ENCODE measurements at regions of chr1 and their contacts with region 1.

Region 1: DNA sequence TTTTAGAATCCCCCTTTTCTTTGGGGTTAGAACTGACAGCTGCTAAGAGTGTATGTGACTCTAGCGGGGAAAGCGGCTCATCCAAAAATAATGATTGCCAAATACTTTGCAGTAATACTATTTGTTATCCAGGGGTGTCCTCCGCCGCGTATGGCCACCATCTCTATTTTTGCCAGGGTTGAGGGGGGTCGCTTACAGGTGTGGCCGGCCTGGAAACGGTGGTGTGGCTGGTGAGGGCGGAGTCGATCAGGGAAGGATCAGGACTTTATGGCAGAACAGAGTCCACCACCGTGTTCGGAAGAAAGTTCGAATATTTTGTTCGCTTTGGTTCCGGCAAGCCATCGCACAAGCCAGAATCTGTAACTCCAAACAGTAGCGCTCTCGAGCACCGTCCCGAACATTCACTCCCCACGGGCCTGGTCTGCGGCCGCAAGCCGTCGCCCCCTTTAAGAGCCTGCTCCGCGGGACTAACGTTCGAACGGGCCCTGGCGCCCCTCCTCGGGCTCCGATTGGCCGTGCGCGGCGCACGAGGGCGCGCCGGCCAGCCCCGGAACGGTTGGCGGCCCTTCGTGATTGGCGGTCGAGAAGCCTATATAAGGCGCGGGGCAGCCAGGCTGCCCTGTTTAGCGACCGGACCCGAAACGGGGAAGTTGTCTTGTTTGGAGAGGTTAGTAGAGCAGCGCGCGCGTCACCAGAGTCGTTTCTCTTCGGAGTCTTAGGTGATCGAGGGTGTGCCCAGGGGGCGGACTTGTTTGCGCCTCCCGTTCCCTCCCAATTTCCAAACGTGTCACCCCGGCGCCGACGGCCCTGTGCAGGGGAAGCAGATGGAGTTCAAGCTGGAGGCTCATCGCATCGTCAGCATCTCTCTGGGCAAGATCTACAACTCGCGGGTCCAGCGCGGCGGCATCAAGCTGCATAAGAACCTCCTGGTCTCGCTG is at the start of gene IER5:
- DNase-seq: peak; percentile 97
- H3K4me3 ChIP-seq: peak within 1 kb of the TSS; percentile 47 to 97 (median 54)
- H3K27ac ChIP-seq: peak within 1 kb of the TSS; percentile 47
- H3K4me1 ChIP-seq: peaks cover 17% of the 10 kb centered on the region
- H3K27me3 ChIP-seq: no peaks in the 10 kb centered on the region
- CTCF ChIP-seq: no peak
- POLR2A ChIP-seq: peak; percentile 100
- total RNA-seq, gene IER5: 14.4 and 14.9 TPM in 2 replicates

Region 2: DNA sequence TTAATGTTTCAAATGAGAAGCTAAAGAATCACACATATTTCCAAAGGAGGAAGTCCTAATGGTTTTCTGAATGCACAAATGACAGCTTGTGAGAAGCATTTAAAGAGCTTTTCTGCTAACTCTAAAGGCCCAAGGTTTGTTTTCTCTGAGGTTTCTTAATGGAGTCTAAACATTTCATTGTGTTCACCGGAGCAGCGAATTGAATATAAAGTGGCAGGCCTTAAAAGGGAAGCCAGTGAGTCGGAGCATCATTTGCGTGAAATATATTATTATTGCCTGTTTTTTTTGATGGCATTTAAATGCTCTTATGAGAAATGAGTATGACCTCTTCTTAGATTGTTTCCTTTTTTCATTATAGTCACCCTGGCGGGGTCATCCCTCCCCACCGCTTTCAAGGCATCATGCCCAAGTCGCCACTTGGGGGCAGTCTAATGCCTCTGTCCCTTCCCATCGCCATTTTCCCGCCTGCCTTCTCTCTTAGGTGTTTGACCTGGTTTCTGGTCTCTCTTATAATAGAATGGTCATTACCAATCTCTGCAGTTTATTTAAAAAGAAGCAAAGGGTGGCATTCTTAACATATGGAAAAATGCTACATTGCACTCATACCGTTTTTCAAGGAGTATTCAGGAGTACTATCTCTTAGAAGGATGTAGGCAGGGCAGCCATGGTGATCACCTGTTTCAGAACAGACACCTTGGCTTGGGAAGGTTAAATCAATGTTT is 554.9 kb before region 1 on chr1:
- CTCF ChIA-PET with region 1: no interaction called
- POLR2A ChIA-PET with region 1: no interaction called
- dilution Hi-C with region 1: no loop called
- intact Hi-C with region 1: loop called (anchors 5 kb)
- DNase-seq: peak; percentile 66
- H3K4me3 ChIP-seq: no peak overlapping the region
- H3K27ac ChIP-seq: no peak overlapping the region
- H3K4me1 ChIP-seq: peaks cover 20% of the 10 kb centered on the region
- H3K27me3 ChIP-seq: peaks cover 6 to 18% of the 10 kb centered on the region in 2 experiments
- CTCF ChIP-seq: peak; percentile 79 to 88
- POLR2A ChIP-seq: no peak

Region 3: GRCh38 chr1:180997843-180998504 is 90.4 kb before region 1 on chr1:
- CTCF ChIA-PET with region 1: no interaction called
- POLR2A ChIA-PET with region 1: no interaction called
- dilution Hi-C with region 1: no loop called
- intact Hi-C with region 1: no loop called
- DNase-seq: no peak
- H3K4me3 ChIP-seq: no peak overlapping the region
- H3K27ac ChIP-seq: no peak overlapping the region
- H3K4me1 ChIP-seq: no peaks in the 10 kb centered on the region
- H3K27me3 ChIP-seq: no peaks in the 10 kb centered on the region
- CTCF ChIP-seq: no peak
- POLR2A ChIP-seq: no peak

Region 4: DNA sequence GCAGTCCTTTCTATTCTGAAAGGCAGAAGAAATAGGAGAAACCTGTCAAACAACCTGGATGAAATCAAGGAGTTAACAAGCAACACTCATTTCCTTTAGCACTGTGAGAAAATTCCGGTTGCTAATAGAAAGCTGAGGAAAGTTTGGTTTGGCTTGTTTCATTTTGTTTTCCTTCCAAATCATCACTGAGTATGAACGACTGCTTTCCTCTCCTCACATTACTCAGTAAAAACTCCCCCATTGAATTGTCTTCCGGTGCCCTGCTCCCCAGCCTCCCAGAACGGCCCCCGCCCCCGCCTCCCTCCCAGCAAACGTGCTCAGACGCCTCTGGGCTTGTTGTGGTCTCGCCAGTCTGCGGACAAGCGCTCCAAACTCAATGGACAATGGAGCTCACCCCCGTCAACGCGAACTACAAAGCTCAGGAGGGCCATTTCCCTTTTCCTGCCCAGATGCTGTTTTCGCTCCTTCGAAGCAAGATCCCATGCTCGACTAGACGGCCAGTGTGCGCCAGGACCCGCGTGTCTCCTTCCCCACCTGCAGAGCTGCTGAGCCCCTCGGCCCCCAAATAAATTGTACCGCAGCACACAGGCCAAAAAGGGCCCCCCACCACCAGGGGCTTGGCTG is 66.4 kb before region 1 on chr1:
- CTCF ChIA-PET with region 1: interaction called, 4 read pairs
- POLR2A ChIA-PET with region 1: interaction called, 27 read pairs
- dilution Hi-C with region 1: no loop called
- intact Hi-C with region 1: loop called (anchors 1 kb)
- DNase-seq: peak; percentile 96
- H3K4me3 ChIP-seq: peak overlapping the region; percentile 62 to 84 (median 79)
- H3K27ac ChIP-seq: peak overlapping the region; percentile 80
- H3K4me1 ChIP-seq: peaks cover 13% of the 10 kb centered on the region
- H3K27me3 ChIP-seq: peaks cover 5 to 11% of the 10 kb centered on the region in 2 experiments
- CTCF ChIP-seq: no peak
- POLR2A ChIP-seq: peak; percentile 55

Region 5: GRCh38 chr1:181099152-181100014 is 11.0 kb after region 1 on chr1:
- CTCF ChIA-PET with region 1: interaction called, 43 read pairs
- POLR2A ChIA-PET with region 1: interaction called, 114 read pairs
- dilution Hi-C with region 1: no loop called
- intact Hi-C with region 1: loop called (anchors 1 kb)
- DNase-seq: peak; percentile 60
- H3K4me3 ChIP-seq: no peak overlapping the region
- H3K27ac ChIP-seq: peak overlapping the region; percentile 19
- H3K4me1 ChIP-seq: peaks cover 47% of the 10 kb centered on the region
- H3K27me3 ChIP-seq: no peaks in the 10 kb centered on the region
- CTCF ChIP-seq: no peak
- POLR2A ChIP-seq: no peak

Region 6: GRCh38 chr1:181112071-181112929 is 24.0 kb after region 1 on chr1:
- CTCF ChIA-PET with region 1: interaction called, 3 read pairs
- POLR2A ChIA-PET with region 1: interaction called, 114 read pairs
- dilution Hi-C with region 1: no loop called
- intact Hi-C with region 1: loop called (anchors 1 kb)
- DNase-seq: peak; percentile 87
- H3K4me3 ChIP-seq: no peak overlapping the region
- H3K27ac ChIP-seq: no peak overlapping the region
- H3K4me1 ChIP-seq: peaks cover 23% of the 10 kb centered on the region
- H3K27me3 ChIP-seq: no peaks in the 10 kb centered on the region
- CTCF ChIP-seq: no peak
- POLR2A ChIP-seq: no peak

Region 7: GRCh38 chr1:181152892-181153633 is 64.7 kb after region 1 on chr1:
- CTCF ChIA-PET with region 1: interaction called, 20 read pairs
- POLR2A ChIA-PET with region 1: interaction called, 20 read pairs
- dilution Hi-C with region 1: no loop called
- intact Hi-C with region 1: no loop called
- DNase-seq: peak; percentile 98
- H3K4me3 ChIP-seq: no peak overlapping the region
- H3K27ac ChIP-seq: no peak overlapping the region
- H3K4me1 ChIP-seq: peaks cover 7% of the 10 kb centered on the region
- H3K27me3 ChIP-seq: no peaks in the 10 kb centered on the region
- CTCF ChIP-seq: peak; percentile 31 to 72
- POLR2A ChIP-seq: no peak

Region 8: GRCh38 chr1:182391362-182392044 is 1303.2 kb after region 1 on chr1 and contains the start of gene GLUL:
- CTCF ChIA-PET with region 1: no interaction called
- POLR2A ChIA-PET with region 1: no interaction called
- dilution Hi-C with region 1: no loop called
- intact Hi-C with region 1: loop called (anchors 2 kb)
- DNase-seq: peak; percentile 94
- H3K4me3 ChIP-seq: peak within 1 kb of the TSS; percentile 70 to 90 (median 76)
- H3K27ac ChIP-seq: peak within 1 kb of the TSS; percentile 81
- H3K4me1 ChIP-seq: peaks cover 4% of the 10 kb centered on the region
- H3K27me3 ChIP-seq: no peaks in the 10 kb centered on the region
- CTCF ChIP-seq: peak in 1 of 2 donors; percentile 33
- POLR2A ChIP-seq: peak; percentile 99
- total RNA-seq, gene GLUL: 181 and 187 TPM in 2 replicates